IMR-90 (cell line): ENCODE measurements at regions of chr3 and their contacts with region 1.

Region 1: DNA sequence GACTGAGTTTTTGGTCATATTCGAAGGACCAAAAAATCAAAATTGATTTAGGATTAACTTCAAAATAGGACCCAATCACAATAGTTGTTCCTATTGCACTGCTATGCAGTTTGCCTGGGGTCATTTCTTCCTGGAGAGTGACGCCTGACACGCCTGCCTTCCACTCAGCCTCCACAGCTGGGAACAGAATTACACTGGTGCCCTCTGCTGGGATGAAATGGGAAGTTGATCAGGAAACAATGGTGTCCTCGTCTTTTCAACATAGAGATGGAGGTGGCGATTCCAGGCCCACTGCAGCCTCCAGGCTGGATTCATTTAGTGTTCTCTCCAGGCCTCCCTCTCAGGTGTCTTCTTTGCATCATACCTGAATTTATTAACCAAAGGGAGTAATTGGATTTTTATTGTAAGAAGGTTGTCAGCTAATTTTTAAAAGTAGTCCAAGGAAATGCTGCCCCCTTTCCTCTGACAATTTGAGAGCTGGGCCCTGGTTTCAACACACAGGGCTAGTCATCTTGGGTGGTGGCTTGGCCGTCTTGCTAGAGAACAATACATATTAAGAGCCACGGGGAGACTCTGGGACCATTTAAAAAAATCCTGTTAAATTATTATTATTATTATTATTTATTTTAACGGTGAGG is 69.7 kb downstream of the GAP43 start:
- DNase-seq: peak; percentile 72
- ATAC-seq: peak; percentile 97
- H3K4me3 ChIP-seq: no peak overlapping the region
- H3K27ac ChIP-seq: no peak overlapping the region
- H3K4me1 ChIP-seq: peaks cover 5% of the 10 kb centered on the region
- H3K27me3 ChIP-seq: no peaks in the 10 kb centered on the region
- CTCF ChIP-seq: peak; percentile 86
- POLR2A ChIP-seq: peak; percentile 23; the same call in 1 of the 2 replicates
- RAD21 ChIP-seq: peak; percentile 98

Region 2: GRCh38 chr3:114827495-114827894 is 865.5 kb before region 1 on chr3:
- CTCF ChIA-PET with region 1: no interaction called
- POLR2A ChIA-PET with region 1: no interaction called
- dilution Hi-C with region 1: no loop called
- in situ Hi-C with region 1: loop called (anchors 25 kb)
- intact Hi-C with region 1: loop called (anchors 5 kb)
- DNase-seq: peak; percentile 58
- ATAC-seq: peak; percentile 77
- H3K4me3 ChIP-seq: no peak overlapping the region
- H3K27ac ChIP-seq: no peak overlapping the region
- H3K4me1 ChIP-seq: no peaks in the 10 kb centered on the region
- H3K27me3 ChIP-seq: no peaks in the 10 kb centered on the region
- CTCF ChIP-seq: peak; percentile 61
- POLR2A ChIP-seq: no peak
- RAD21 ChIP-seq: peak; percentile 74

Region 3: GRCh38 chr3:115092220-115092791 is 600.7 kb before region 1 on chr3:
- CTCF ChIA-PET with region 1: no interaction called
- POLR2A ChIA-PET with region 1: no interaction called
- dilution Hi-C with region 1: no loop called
- in situ Hi-C with region 1: no loop called
- intact Hi-C with region 1: loop called (anchors 10 kb)
- DNase-seq: peak; percentile 69
- ATAC-seq: peak; percentile 100
- H3K4me3 ChIP-seq: no peak overlapping the region
- H3K27ac ChIP-seq: no peak overlapping the region
- H3K4me1 ChIP-seq: no peaks in the 10 kb centered on the region
- H3K27me3 ChIP-seq: no peaks in the 10 kb centered on the region
- CTCF ChIP-seq: peak; percentile 82
- POLR2A ChIP-seq: no peak
- RAD21 ChIP-seq: peak; percentile 81

Region 4: GRCh38 chr3:115147329-115148141 is 545.5 kb before region 1 on chr3:
- CTCF ChIA-PET with region 1: no interaction called
- POLR2A ChIA-PET with region 1: no interaction called
- dilution Hi-C with region 1: no loop called
- in situ Hi-C with region 1: no loop called
- intact Hi-C with region 1: loop called (anchors 1 kb)
- DNase-seq: peak; percentile 100
- ATAC-seq: peak; percentile 84
- H3K4me3 ChIP-seq: peak overlapping the region; percentile 82
- H3K27ac ChIP-seq: peak overlapping the region; percentile 81
- H3K4me1 ChIP-seq: no peaks in the 10 kb centered on the region
- H3K27me3 ChIP-seq: no peaks in the 10 kb centered on the region
- CTCF ChIP-seq: no peak
- POLR2A ChIP-seq: peak; percentile 89
- RAD21 ChIP-seq: no peak; the same call in 1 of the 2 replicates

Region 5: DNA sequence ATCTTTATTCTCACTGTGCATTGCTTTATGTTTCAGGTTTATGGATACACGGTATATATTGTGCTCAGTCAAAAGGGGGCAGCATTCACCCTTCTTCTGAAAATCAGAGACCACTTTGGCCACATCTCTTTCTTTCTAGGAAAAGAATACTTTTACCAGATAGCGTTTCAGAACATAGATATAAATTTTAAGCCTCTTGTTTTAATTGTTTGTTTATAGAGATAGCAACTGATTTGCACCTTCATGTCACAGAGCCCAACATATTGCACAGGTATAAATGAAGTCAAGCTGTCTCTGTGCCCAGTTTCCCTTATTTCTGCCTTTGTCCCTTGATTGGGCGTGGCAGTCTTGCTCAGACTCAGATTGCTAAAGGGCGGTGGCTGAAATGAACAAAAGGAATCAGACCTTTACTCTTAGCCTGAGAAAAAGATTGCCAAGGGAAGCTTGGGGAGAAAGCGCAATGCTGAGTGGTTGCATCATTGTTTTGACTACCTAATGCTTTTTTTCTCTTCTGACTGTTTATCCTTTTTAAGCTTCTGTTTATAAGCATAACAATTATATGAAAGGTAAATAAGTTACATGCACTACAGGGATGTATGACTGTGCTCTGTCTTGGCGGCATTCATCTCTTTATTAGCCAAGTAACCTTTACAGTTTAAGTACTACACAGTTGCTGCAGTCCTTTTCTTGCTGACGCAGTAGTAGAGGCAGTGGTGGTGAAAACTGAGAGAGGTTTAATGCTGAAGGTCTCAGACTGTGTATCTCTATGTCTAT is 475.1 kb before region 1 on chr3:
- CTCF ChIA-PET with region 1: interaction called, 22 read pairs
- POLR2A ChIA-PET with region 1: no interaction called
- dilution Hi-C with region 1: no loop called
- in situ Hi-C with region 1: loop called (anchors 5 kb)
- intact Hi-C with region 1: loop called (anchors 1 kb)
- DNase-seq: peak; percentile 71
- ATAC-seq: peak; percentile 97
- H3K4me3 ChIP-seq: no peak overlapping the region
- H3K27ac ChIP-seq: 0 out of 2 replicates have a peak overlapping the region, but pooled peaks have one; percentile 42
- H3K4me1 ChIP-seq: peaks cover 3% of the 10 kb centered on the region; the same call in 1 of the 2 replicates
- H3K27me3 ChIP-seq: no peaks in the 10 kb centered on the region
- CTCF ChIP-seq: peak; percentile 93
- POLR2A ChIP-seq: no peak
- RAD21 ChIP-seq: peak; percentile 93

Region 6: DNA sequence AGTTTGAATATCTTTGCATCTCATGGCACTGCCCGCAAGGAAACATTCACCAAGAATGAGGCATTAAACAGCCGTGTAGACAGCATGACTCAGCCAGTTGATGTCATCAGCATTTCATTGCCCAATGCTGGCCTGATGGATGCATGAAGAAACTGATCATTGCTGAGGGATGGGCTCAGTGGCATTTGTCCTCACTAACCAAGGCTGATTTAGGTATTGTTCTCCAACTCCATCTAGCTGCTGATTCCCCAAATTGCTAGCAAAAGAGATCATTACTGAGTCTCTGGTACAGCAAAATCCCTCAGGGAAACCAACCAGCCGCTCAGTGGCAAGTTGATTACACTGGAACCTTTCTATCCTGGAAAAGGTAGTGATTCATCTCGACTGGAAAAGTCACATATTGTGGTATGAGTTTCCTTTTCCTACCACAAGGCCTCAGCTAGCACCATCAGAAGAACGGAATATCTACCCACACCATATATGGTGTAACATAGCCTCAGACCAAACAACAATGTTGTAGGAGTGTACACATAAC is 256.2 kb before region 1 on chr3:
- CTCF ChIA-PET with region 1: no interaction called
- POLR2A ChIA-PET with region 1: no interaction called
- dilution Hi-C with region 1: no loop called
- in situ Hi-C with region 1: no loop called
- intact Hi-C with region 1: loop called (anchors 10 kb)
- DNase-seq: peak; percentile 93
- ATAC-seq: peak; percentile 92
- H3K4me3 ChIP-seq: no peak overlapping the region
- H3K27ac ChIP-seq: no peak overlapping the region
- H3K4me1 ChIP-seq: peaks cover 3% of the 10 kb centered on the region; the same call in 1 of the 2 replicates
- H3K27me3 ChIP-seq: no peaks in the 10 kb centered on the region
- CTCF ChIP-seq: peak; percentile 48
- POLR2A ChIP-seq: no peak
- RAD21 ChIP-seq: peak; percentile 58

Region 7: DNA sequence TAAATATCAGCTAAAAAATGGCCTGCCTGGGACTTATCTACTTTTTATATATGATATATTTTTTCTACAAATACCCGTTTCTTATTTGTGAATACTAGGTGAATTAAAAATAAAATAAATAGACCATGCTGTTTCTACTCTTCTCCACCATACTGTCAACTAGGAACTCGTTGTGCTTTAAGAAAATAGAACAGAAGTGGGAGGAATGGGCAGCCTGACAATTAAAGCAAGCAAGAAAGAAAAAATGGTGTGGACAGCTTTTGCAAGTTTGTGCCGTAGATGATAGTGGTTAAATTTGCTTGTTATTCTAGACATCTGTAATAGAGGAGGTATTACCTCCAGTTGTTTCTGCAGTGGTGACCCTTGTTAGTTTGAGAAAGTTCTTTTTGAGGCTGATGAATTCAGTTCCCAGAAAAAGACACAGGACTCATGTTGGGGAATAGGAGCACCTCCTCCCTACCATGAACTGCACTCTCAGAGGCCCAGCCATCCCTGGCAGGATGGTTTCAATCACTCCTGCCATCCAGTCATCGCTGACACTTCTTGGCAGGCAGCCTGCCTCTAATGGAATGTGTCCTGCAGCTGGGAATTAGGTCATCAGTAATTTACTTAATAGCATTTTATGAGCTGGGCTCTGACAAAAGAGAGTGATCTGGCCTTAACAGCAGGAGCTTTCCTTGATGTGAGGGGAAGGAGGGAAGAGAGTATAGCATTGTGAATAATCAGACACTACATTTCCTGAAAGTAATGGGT is 174.7 kb before region 1 on chr3:
- CTCF ChIA-PET with region 1: no interaction called
- POLR2A ChIA-PET with region 1: no interaction called
- dilution Hi-C with region 1: no loop called
- in situ Hi-C with region 1: no loop called
- intact Hi-C with region 1: no loop called
- DNase-seq: peak; percentile 79
- ATAC-seq: peak; percentile 83
- H3K4me3 ChIP-seq: no peak overlapping the region
- H3K27ac ChIP-seq: no peak overlapping the region
- H3K4me1 ChIP-seq: peaks cover 2% of the 10 kb centered on the region; the same call in 1 of the 2 replicates
- H3K27me3 ChIP-seq: no peaks in the 10 kb centered on the region
- CTCF ChIP-seq: no peak
- POLR2A ChIP-seq: no peak
- RAD21 ChIP-seq: no peak

Region 8: GRCh38 chr3:115814778-115815380 is 121.9 kb after region 1 on chr3:
- CTCF ChIA-PET with region 1: interaction called, 8 read pairs
- POLR2A ChIA-PET with region 1: no interaction called
- dilution Hi-C with region 1: no loop called
- in situ Hi-C with region 1: loop called (anchors 5 kb)
- intact Hi-C with region 1: loop called (anchors 1 kb)
- DNase-seq: peak; percentile 76
- ATAC-seq: peak; percentile 95
- H3K4me3 ChIP-seq: no peak overlapping the region
- H3K27ac ChIP-seq: no peak overlapping the region
- H3K4me1 ChIP-seq: no peaks in the 10 kb centered on the region
- H3K27me3 ChIP-seq: no peaks in the 10 kb centered on the region
- CTCF ChIP-seq: peak; percentile 88
- POLR2A ChIP-seq: peak; percentile 62
- RAD21 ChIP-seq: peak; percentile 94

Region 9: GRCh38 chr3:116339441-116340028 is 646.5 kb after region 1 on chr3:
- CTCF ChIA-PET with region 1: no interaction called
- POLR2A ChIA-PET with region 1: no interaction called
- dilution Hi-C with region 1: no loop called
- in situ Hi-C with region 1: no loop called
- intact Hi-C with region 1: no loop called
- DNase-seq: peak; percentile 88
- ATAC-seq: peak; percentile 86
- H3K4me3 ChIP-seq: no peak overlapping the region
- H3K27ac ChIP-seq: no peak overlapping the region
- H3K4me1 ChIP-seq: no peaks in the 10 kb centered on the region
- H3K27me3 ChIP-seq: no peaks in the 10 kb centered on the region
- CTCF ChIP-seq: no peak
- POLR2A ChIP-seq: no peak
- RAD21 ChIP-seq: no peak